ENCODE measurements at regions of chr14 and their contacts with region 1.

Region 1: DNA sequence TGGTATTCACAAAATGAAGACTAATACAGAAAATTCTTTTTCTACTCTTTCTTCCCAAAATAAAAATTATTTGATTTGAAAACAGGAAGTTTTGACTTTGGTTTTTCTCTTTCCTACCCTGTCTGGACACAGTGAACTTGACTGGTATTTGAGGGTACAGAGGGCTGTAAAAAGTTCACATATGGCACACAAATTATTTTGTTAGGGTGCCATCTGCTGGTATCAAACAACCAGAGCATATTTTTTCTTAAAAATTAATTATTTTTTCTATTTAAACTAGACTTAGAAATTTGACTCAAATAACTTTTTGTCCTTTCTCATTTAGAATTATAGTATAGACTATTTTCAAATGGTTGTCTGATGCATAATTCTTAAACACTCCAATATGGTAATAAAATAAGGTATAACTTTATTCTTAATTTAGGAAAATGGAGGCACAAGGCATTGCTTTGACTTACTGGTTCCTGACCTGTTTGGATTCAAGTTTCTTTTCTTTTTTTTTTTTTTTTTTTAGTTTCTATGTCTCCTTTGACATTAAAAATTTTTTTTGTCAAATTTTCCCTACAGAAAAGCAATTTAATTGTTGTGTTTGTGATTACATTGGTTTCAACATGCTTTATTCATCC is 390.6 kb downstream of the PRKD1 start:
- DNase-seq: no peak
- H3K4me3 ChIP-seq: no peak overlapping the region
- H3K27ac ChIP-seq: no peak overlapping the region
- H3K4me1 ChIP-seq: no peaks in the 10 kb centered on the region
- H3K27me3 ChIP-seq: peaks cover 3% of the 10 kb centered on the region
- CTCF ChIP-seq: peak in 5 of 6 experiments; percentile 12 to 58 (median 36)
- POLR2A ChIP-seq: no peak

Region 2: DNA sequence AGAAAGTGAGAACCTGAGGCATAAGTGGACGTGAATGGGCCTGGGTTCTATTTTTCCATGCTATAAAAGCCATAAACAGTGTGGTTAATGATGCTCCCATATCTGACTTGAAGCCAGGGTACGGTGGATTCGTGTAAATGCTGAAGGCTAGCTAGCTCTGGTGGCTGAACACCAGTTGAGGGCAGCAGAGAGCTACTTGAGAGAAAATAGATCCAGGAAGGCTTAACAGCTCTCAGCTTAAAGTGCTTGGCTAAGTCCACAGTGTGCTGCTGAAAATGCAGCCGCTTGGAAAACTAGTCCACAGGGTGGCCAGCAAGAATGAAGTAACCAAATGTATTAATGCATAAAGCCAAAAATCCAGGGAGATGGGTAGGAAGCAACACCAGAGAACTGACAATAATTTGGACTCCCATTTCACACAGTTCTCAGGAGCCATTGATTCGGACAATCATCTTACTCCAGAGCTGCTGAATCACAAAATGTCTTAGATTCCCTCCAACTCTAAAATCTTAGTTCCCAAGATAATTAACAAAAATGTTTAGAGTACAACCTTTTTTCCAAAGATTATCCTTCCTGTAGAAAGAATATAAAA is 785.4 kb before region 1 on chr14:
- intact Hi-C with region 1: loop called (anchors 5 to 10 kb)
- DNase-seq: peak in 6 of 7 donors; percentile 27 to 54 (median 39)
- H3K4me3 ChIP-seq: no peak overlapping the region
- H3K27ac ChIP-seq: no peak overlapping the region
- H3K4me1 ChIP-seq: no peaks in the 10 kb centered on the region
- H3K27me3 ChIP-seq: peaks cover 29% of the 10 kb centered on the region
- CTCF ChIP-seq: peak in 5 of 6 experiments; percentile 20 to 48 (median 27)
- POLR2A ChIP-seq: no peak

Region 3: GRCh38 chr14:28756884-28757570 is 780.0 kb before region 1 on chr14:
- intact Hi-C with region 1: loop called (anchors 5 to 10 kb)
- DNase-seq: no peak
- H3K4me3 ChIP-seq: no peak overlapping the region
- H3K27ac ChIP-seq: no peak overlapping the region
- H3K4me1 ChIP-seq: no peaks in the 10 kb centered on the region
- H3K27me3 ChIP-seq: peaks cover 83% of the 10 kb centered on the region
- CTCF ChIP-seq: peak; percentile 13 to 42 (median 20)
- POLR2A ChIP-seq: no peak